GM10248 (cell line): ENCODE measurements at regions of chr10 and their contacts with region 1.

Region 1: GRCh38 chr10:13634207-13634606 is 47.4 kb downstream of the PRPF18 start:
- DNase-seq: no peak
- CTCF ChIP-seq: no peak

Region 2: GRCh38 chr10:13644866-13645265 is 10.7 kb after region 1 on chr10:
- CTCF ChIA-PET with region 1: interaction called, 19 read pairs
- POLR2A ChIA-PET with region 1: no interaction called
- DNase-seq: no peak
- CTCF ChIP-seq: no peak

Region 3: DNA sequence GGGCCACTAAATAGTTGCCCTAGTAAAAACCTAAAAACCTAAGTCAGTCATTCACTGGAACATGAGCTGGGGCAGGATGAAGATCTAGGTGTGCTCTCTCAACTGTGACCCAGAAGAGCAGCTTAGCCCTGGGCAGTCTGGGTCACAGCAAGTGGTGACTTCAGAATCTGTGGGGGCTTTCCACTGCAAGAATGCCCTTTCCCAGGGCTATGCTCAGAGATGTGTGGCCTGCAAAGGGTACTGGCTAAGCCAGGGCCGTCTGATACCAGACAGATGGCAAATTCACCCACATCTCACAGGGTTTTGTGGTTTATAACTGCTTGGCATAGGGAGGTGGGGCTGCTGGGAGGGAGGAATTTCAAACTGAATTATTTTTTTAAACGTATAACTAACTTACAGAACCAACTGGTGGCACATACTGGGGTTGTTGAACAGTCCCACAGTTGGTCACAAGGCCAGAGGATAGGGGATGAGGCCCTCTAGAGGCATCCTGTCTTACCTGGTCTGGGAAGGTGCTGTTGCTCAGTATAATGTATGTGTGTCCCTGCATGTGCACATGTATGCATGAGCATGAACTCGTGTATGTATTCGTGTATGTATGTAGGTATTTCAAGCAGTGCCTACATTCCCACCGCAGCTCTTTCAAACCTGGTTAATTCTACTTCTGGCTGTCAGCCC is 15.8 kb after region 1 on chr10:
- CTCF ChIA-PET with region 1: interaction called, 19 read pairs
- POLR2A ChIA-PET with region 1: no interaction called
- DNase-seq: no peak
- CTCF ChIP-seq: no peak

Region 4: GRCh38 chr10:13673156-13673555 is 38.9 kb after region 1 on chr10:
- CTCF ChIA-PET with region 1: no interaction called
- POLR2A ChIA-PET with region 1: no interaction called
- DNase-seq: no peak
- CTCF ChIP-seq: no peak